Heart right ventricle (tissue), 16 donors: ENCODE measurements at regions of chr1 and their contacts with region 1.

Region 1: DNA sequence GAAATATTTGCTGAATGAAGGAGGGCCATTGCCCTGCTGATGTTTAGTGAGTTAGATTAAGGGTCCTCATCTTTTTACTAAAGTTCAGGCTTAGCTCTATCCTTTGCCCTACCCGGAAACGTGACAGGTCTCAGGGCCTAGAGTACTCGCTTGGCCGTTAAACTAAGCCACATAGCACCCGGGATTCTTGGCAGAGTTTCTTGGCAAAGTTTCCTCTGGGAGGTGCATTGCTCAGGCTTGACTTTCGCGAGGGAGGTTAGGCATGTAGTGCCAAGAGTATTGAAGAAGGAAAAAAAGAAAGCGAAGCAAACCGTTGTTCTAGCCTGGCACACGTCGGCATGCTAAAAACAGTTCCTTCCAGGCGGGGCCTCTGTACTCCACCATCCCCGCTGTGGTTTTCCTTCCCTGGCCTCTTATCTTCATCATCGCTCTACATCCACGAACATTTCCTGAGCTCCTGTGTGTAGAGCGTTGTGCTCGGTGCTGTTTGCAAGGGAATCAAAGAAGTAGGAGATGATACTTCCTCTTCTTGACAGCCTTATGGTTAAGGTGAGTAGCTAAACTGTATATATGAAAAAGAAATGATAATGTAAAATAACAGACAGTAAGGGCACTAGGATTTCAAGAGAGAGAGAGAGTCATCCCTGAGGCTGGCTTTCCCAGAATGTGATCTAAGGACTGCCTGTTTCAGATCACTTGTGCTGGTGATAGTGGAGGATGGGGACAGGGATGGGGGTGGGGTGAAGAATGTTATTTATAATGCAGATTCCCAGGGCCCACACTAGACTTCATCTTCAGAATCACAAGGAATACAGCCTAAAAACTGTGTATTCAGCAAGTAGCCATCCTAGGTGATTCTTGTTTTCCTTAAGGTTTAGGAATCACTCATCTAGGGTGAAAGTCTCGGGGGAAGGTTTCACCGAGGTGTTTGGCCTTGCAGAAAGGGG is 18.8 kb downstream of the RNF220 start:
- DNase-seq: peak; percentile 27 to 77
- ATAC-seq: peak; percentile 85 to 95 (median 92)
- H3K4me3 ChIP-seq: peak overlapping the region in 4 of 10 donors; percentile 8 to 24 (median 15)
- H3K27ac ChIP-seq: peak overlapping the region in 9 of 10 donors; percentile 9 to 81 (median 37)
- H3K4me1 ChIP-seq: peaks cover 11 to 51% (median 36%) of the 10 kb centered on the region in 9 donors
- H3K27me3 ChIP-seq: peaks cover 0 to 63% (median 30%) of the 10 kb centered on the region in 7 donors
- CTCF ChIP-seq: no peak

Region 2: GRCh38 chr1:44405041-44405797 is 18.6 kb before region 1 on chr1 and contains the start of gene RNF220:
- intact Hi-C with region 1: loop called in 1 of 10 experiments (anchors 2 kb)
- DNase-seq: peak; percentile 54 to 70
- ATAC-seq: peak; percentile 67 to 85 (median 82)
- H3K4me3 ChIP-seq: peak within 1 kb of the TSS; percentile 23 to 67 (median 52)
- H3K27ac ChIP-seq: peak within 1 kb of the TSS in 7 of 10 donors; percentile 15 to 74 (median 52)
- H3K4me1 ChIP-seq: peaks cover 7 to 53% (median 40%) of the 10 kb centered on the region in 9 donors
- H3K27me3 ChIP-seq: peaks cover 21 to 99% (median 91%) of the 10 kb centered on the region in 7 donors
- CTCF ChIP-seq: peak in 5 of 9 donors; percentile 15 to 37 (median 25)
- total RNA-seq, gene RNF220: 46.4 to 82.5 (median 58.0) TPM

Region 3: GRCh38 chr1:44472620-44473525 is 49.0 kb after region 1 on chr1:
- intact Hi-C with region 1: no loop called
- DNase-seq: no peak
- ATAC-seq: peak in 1 of 8 donors; percentile 33
- H3K4me3 ChIP-seq: peak overlapping the region in 2 of 10 donors; percentile 3 to 8
- H3K27ac ChIP-seq: peak overlapping the region in 1 of 10 donors; percentile 42
- H3K4me1 ChIP-seq: peaks cover 0 to 9% (median 0%) of the 10 kb centered on the region in 9 donors
- H3K27me3 ChIP-seq: no peaks in the 10 kb centered on the region
- CTCF ChIP-seq: no peak

Region 4: GRCh38 chr1:44485229-44485933 is 61.5 kb after region 1 on chr1:
- intact Hi-C with region 1: loop called in 2 of 10 experiments (anchors 10 kb)
- DNase-seq: peak in 1 of 2 donors; percentile 43
- ATAC-seq: peak in 7 of 8 donors; percentile 44 to 94 (median 80)
- H3K4me3 ChIP-seq: peak overlapping the region in 1 of 10 donors; percentile 15
- H3K27ac ChIP-seq: peak overlapping the region; percentile 42 to 89 (median 64)
- H3K4me1 ChIP-seq: peaks cover 7 to 34% (median 25%) of the 10 kb centered on the region in 9 donors
- H3K27me3 ChIP-seq: no peaks in the 10 kb centered on the region
- CTCF ChIP-seq: no peak

Region 5: DNA sequence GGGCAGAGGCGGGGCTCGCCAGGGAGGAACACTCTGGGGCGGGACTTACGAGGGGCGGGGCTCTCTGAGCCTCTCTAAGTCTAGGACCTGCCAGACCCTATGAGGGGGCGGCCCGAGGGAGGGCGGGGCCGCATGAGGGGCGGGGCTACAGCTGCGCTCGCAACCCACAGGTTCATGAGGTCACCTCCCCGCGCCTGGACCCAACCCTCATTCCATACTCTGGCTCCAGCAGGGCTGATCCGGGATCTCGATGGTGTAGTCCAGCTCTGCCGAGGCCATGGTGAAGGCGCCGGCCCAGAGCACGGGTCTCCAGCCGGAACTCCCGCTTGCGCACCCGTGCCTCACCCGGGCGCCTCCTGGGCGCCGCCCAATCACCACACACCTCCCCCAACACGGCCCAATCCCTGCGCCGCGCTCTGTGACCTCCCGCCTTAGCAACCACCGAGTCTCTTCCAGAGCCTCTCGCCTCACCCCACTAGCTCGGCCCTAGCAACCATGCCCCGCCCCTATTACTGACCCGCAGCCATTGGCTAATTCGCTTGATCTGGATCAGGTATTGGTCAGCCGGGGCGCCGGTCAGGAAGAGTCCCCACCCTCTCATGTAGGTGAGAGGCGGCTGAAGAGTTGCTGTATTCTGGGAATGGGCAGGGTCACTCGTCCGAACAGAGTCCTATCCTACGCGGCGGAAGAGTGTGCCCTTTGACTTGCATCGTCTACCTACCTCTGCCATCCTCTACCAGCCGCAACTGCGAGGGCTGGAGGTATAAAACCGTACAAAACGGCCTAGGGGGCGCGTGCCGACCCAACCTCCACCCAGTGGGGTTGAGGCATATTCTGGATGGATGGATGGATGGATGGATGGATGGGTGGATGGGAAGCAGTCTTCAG is 250.5 kb after region 1 on chr1 and contains the starts of genes ARMH1 and TMEM53:
- intact Hi-C with region 1: no loop called
- DNase-seq: peak; percentile 98 to 99
- ATAC-seq: peak; percentile 96 to 98 (median 98)
- H3K4me3 ChIP-seq: peak within 1 kb of the TSS; percentile 51 to 76 (median 62)
- H3K27ac ChIP-seq: peak within 1 kb of the TSS; percentile 76 to 96 (median 92)
- H3K4me1 ChIP-seq: peaks cover 4 to 70% (median 30%) of the 10 kb centered on the region in 9 donors
- H3K27me3 ChIP-seq: no peaks in the 10 kb centered on the region
- CTCF ChIP-seq: peak in 1 of 9 donors; percentile 12
- total RNA-seq, gene ARMH1: 0.62 to 3.3 (median 1.1) TPM in 5 of 10 donors, not detected in the others
- total RNA-seq, gene TMEM53: 6.6 to 18.6 (median 12.2) TPM

Region 6: GRCh38 chr1:44867801-44868200 is 443.9 kb after region 1 on chr1:
- intact Hi-C with region 1: no loop called
- DNase-seq: no peak
- ATAC-seq: no peak
- H3K4me3 ChIP-seq: no peak overlapping the region
- H3K27ac ChIP-seq: no peak overlapping the region
- H3K4me1 ChIP-seq: peaks cover 0 to 7% (median 0%) of the 10 kb centered on the region in 9 donors
- H3K27me3 ChIP-seq: no peaks in the 10 kb centered on the region
- CTCF ChIP-seq: no peak